Testis (tissue), 5 donors: ENCODE measurements at regions of chr16 and their contacts with region 1.

Region 1: DNA sequence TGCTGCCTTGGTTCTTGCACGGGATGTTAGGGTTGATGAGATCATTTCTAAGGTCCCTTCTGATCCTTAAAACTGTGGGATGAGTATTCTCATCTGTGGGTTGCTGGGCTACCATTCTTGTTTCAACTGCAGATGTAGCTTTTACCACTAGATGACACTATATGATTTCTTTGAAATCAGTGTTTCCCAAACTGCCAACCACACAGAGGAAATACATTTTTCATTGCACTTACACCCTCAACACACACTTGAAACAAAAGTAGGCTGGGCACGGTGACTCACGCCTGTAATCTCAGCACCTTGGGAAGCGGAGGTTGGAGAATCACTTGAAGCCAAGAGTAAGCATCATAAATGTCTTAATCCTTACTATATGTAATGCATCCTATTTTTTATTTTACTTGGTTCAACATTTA is 15.3 kb downstream of the LCMT1 start:
- DNase-seq: no peak
- H3K4me3 ChIP-seq: no peak overlapping the region
- H3K27ac ChIP-seq: no peak overlapping the region
- H3K4me1 ChIP-seq: peaks cover 7% of the 10 kb centered on the region
- H3K27me3 ChIP-seq: no peaks in the 10 kb centered on the region
- CTCF ChIP-seq: peak; percentile 42 to 53 (median 48)
- POLR2A ChIP-seq: no peak

Region 2: GRCh38 chr16:25224731-25225319 is 98.0 kb after region 1 on chr16:
- intact Hi-C with region 1: loop called (anchors 10 kb)
- DNase-seq: no peak
- H3K4me3 ChIP-seq: no peak overlapping the region
- H3K27ac ChIP-seq: no peak overlapping the region
- H3K4me1 ChIP-seq: no peaks in the 10 kb centered on the region
- H3K27me3 ChIP-seq: no peaks in the 10 kb centered on the region
- CTCF ChIP-seq: no peak
- POLR2A ChIP-seq: no peak